ENCODE measurements at regions of chr2 and their contacts with region 1.

Region 1: GRCh38 chr2:189661148-189661956 is at the start of gene ASNSD1:
- DNase-seq: peak; percentile 99
- H3K4me3 Mint-ChIP-seq: no peak within 1 kb of the TSS
- H3K27ac Mint-ChIP-seq: no peak within 1 kb of the TSS
- H3K4me1 Mint-ChIP-seq: peaks cover 5% of the 10 kb centered on the region
- H3K27me3 Mint-ChIP-seq: no peaks in the 10 kb centered on the region
- CTCF ChIP-seq: peak; percentile 87
- total RNA-seq, gene ASNSD1: 29.8 and 41.4 TPM in 2 replicates

Region 2: GRCh38 chr2:189674374-189675112 is 13.2 kb after region 1 on chr2 and contains the start of gene ANKAR:
- CTCF ChIA-PET with region 1: interaction called, 123 read pairs
- POLR2A ChIA-PET with region 1: interaction called, 59 read pairs
- intact Hi-C with region 1: no loop called
- DNase-seq: peak; percentile 62
- H3K4me3 Mint-ChIP-seq: peak within 1 kb of the TSS; percentile 86
- H3K27ac Mint-ChIP-seq: peak within 1 kb of the TSS; percentile 95
- H3K4me1 Mint-ChIP-seq: peaks cover 5% of the 10 kb centered on the region
- H3K27me3 Mint-ChIP-seq: no peaks in the 10 kb centered on the region
- CTCF ChIP-seq: peak; percentile 75
- total RNA-seq, gene ANKAR: 4.6 and 5.1 TPM in 2 replicates

Region 3: DNA sequence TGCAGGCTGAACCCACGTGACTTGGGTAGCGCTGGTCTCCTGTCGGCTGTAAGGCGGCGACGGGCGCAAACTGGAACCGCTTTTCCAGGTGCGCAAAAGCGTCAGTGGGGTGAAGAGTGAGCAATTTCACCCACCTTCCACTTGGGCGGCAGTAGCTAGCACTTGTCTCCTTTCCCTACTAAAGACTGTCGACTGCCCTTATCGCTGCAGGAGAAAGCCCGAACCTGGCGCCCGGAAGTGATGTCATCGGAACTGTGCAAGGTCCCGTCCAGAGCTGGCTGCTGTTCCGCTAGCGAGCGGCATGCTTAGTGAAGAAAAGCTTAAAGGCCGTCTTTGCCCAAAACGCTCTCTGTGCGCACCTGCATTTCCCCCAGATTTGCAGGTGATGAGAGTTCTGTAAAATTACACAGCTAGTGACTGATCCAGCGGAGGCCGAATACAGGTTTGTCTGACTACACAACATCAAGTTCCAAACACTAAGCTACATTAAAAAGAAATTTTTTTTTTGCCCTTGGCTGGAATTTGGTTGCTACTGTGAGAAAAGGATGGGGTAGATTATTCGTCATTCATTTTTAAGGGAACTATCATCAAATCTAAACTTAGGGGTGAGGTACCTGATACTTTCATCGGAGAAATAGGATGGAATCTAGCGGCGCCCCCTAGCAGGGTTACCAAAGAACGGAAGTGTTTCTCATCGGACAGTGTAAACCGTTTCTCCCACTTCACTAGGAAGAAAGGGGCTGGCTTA is 101.4 kb after region 1 on chr2 and contains the start of gene OSGEPL1:
- CTCF ChIA-PET with region 1: interaction called, 30 read pairs
- POLR2A ChIA-PET with region 1: interaction called, 9 read pairs
- intact Hi-C with region 1: loop called (anchors 2 kb)
- DNase-seq: peak; percentile 93
- H3K4me3 Mint-ChIP-seq: peak within 1 kb of the TSS; percentile 94
- H3K27ac Mint-ChIP-seq: peak within 1 kb of the TSS; percentile 78
- H3K4me1 Mint-ChIP-seq: no peaks in the 10 kb centered on the region
- H3K27me3 Mint-ChIP-seq: no peaks in the 10 kb centered on the region
- CTCF ChIP-seq: peak; percentile 46
- total RNA-seq, gene OSGEPL1: 3.7 and 5.1 TPM in 2 replicates

Region 4: GRCh38 chr2:190023861-190024260 is 362.5 kb after region 1 on chr2:
- CTCF ChIA-PET with region 1: interaction called, 4 read pairs
- POLR2A ChIA-PET with region 1: no interaction called
- intact Hi-C with region 1: loop called (anchors 1 kb)
- DNase-seq: peak; percentile 75
- H3K4me3 Mint-ChIP-seq: no peak overlapping the region
- H3K27ac Mint-ChIP-seq: no peak overlapping the region
- H3K4me1 Mint-ChIP-seq: no peaks in the 10 kb centered on the region
- H3K27me3 Mint-ChIP-seq: no peaks in the 10 kb centered on the region
- CTCF ChIP-seq: peak; percentile 33

Region 5: DNA sequence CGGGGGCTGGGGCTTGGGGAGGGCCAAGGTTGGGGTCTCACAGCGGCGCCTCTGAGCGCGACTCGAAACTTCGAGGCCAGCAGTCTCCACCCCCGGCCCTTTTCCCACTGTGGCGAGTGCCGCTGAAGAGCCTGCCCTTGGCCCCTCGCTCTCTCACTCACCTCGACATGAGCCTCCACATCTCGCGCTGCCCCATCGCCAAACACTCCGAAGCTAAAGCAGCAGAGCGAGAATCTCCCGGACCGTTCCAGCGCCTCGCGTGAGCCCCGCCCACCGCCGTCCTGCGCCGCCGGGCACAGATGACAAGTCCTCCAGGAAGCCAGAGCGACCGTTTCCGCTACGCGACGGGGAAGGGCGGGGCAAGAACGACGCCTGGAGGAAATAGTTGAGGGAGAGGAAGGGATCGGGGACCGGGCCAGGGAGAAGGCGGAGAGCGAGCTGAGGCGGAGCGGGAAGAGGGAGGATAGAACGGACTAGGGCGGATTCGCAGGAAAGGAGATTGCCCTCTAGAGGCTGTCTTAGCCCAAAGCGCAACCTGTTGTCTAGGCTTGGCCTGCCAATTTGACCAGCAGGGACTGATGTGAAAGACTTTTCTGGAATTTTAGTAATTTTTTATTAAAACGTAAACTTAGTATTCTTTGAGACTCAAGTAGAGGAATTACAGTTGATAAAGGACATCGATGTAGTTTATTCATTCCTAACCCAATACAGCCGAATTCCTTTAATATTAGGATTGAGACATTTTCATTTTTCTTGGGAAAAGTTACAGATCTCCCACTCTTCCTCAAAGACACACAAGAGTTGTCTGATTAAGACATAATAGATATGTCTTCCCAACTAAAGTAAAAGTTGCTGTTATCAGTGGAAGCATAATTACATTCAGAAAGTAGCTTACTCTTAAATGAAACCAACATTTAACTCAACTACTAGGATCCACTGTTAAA is 658.5 kb after region 1 on chr2 and contains the start of gene HIBCH:
- CTCF ChIA-PET with region 1: no interaction called
- POLR2A ChIA-PET with region 1: no interaction called
- intact Hi-C with region 1: loop called (anchors 5 kb)
- DNase-seq: peak; percentile 99
- H3K4me3 Mint-ChIP-seq: peak within 1 kb of the TSS; percentile 87
- H3K27ac Mint-ChIP-seq: peak within 1 kb of the TSS; percentile 78
- H3K4me1 Mint-ChIP-seq: peaks cover 35% of the 10 kb centered on the region
- H3K27me3 Mint-ChIP-seq: no peaks in the 10 kb centered on the region
- CTCF ChIP-seq: peak; percentile 56
- total RNA-seq, gene HIBCH: 14.7 and 16.2 TPM in 2 replicates